CD4-positive, alpha-beta T cell (primary cell): ENCODE measurements at regions of chr5 and their contacts with region 1.

Region 1: DNA sequence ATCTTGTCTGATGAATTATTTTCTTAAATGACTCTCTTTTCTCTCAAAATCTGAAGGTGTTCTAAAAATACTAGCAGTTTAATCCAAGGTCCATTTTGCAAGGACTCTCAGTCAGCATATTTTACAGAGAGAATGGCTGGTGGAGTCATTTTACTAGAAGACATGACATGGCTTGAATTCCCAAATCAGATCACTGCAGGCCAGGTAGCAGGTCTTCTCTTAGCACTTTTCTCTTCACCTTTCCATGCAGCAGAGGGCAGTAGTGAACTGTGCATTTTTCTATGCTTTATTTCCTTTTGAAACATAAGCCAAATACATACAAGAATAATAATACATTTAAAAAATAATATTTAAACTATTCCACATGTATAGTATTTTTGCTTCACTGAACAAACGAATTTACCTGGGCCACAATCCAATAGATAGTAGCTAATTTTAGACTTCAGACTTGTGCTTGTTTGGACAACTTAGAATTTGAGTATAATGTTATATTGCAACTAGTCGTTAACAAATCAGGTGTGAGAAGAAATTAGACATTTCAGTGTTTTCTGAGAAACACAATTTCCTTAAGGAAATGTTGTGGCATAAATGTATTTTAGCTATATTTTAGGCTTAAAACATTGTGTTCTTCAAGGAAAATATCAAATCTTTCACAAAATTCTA is 289.4 kb upstream of the DAB2 start:
- DNase-seq: peak in 11 of 14 experiments; percentile 6 to 71 (median 18)
- ATAC-seq: peak; percentile 34
- H3K4me3 ChIP-seq: no peak overlapping the region
- H3K4me3 Mint-ChIP-seq: no peak overlapping the region
- H3K27ac ChIP-seq: no peak overlapping the region
- H3K27ac Mint-ChIP-seq: no peak overlapping the region
- H3K4me1 ChIP-seq: no peaks in the 10 kb centered on the region
- H3K4me1 Mint-ChIP-seq: no peaks in the 10 kb centered on the region
- H3K27me3 ChIP-seq: peaks cover under 1 to 2% of the 10 kb centered on the region in 2 experiments
- H3K27me3 Mint-ChIP-seq: peaks cover 11% of the 10 kb centered on the region
- CTCF ChIP-seq: peak; percentile 61

Region 2: GRCh38 chr5:39700523-39700922 is 13.6 kb before region 1 on chr5:
- CTCF ChIA-PET with region 1: interaction called, 10 read pairs
- POLR2A ChIA-PET with region 1: no interaction called
- intact Hi-C with region 1: no loop called
- DNase-seq: no peak
- ATAC-seq: no peak
- H3K4me3 ChIP-seq: no peak overlapping the region
- H3K4me3 Mint-ChIP-seq: no peak overlapping the region
- H3K27ac ChIP-seq: no peak overlapping the region
- H3K27ac Mint-ChIP-seq: no peak overlapping the region
- H3K4me1 ChIP-seq: no peaks in the 10 kb centered on the region
- H3K4me1 Mint-ChIP-seq: no peaks in the 10 kb centered on the region
- H3K27me3 ChIP-seq: peaks cover 0 to 4% of the 10 kb centered on the region in 2 experiments
- H3K27me3 Mint-ChIP-seq: peaks cover 16% of the 10 kb centered on the region
- CTCF ChIP-seq: no peak

Region 3: GRCh38 chr5:39948867-39949468 is 234.8 kb after region 1 on chr5:
- CTCF ChIA-PET with region 1: no interaction called
- POLR2A ChIA-PET with region 1: no interaction called
- intact Hi-C with region 1: loop called in 1 of 2 experiments (anchors 2 kb)
- DNase-seq: peak; percentile 7 to 85 (median 50)
- ATAC-seq: peak; percentile 77
- H3K4me3 ChIP-seq: no peak overlapping the region
- H3K4me3 Mint-ChIP-seq: no peak overlapping the region
- H3K27ac ChIP-seq: no peak overlapping the region
- H3K27ac Mint-ChIP-seq: no peak overlapping the region
- H3K4me1 ChIP-seq: no peaks in the 10 kb centered on the region
- H3K4me1 Mint-ChIP-seq: peaks cover 5% of the 10 kb centered on the region
- H3K27me3 ChIP-seq: no peaks in the 10 kb centered on the region
- H3K27me3 Mint-ChIP-seq: no peaks in the 10 kb centered on the region
- CTCF ChIP-seq: peak; percentile 72